Heart right ventricle (tissue), 16 donors: ENCODE measurements at regions of chr10 and their contacts with region 1.

Region 1: GRCh38 chr10:58775960-58776567 is 263.4 kb downstream of the BICC1 start:
- DNase-seq: peak in 1 of 2 donors; percentile 40
- ATAC-seq: peak; percentile 68 to 93 (median 82)
- H3K4me3 ChIP-seq: no peak overlapping the region
- H3K27ac ChIP-seq: peak overlapping the region in 5 of 10 donors; percentile 28 to 53 (median 49)
- H3K4me1 ChIP-seq: peaks cover 0 to 34% (median 16%) of the 10 kb centered on the region in 9 donors
- H3K27me3 ChIP-seq: peaks cover 0 to 7% (median 0%) of the 10 kb centered on the region in 7 donors
- CTCF ChIP-seq: no peak

Region 2: DNA sequence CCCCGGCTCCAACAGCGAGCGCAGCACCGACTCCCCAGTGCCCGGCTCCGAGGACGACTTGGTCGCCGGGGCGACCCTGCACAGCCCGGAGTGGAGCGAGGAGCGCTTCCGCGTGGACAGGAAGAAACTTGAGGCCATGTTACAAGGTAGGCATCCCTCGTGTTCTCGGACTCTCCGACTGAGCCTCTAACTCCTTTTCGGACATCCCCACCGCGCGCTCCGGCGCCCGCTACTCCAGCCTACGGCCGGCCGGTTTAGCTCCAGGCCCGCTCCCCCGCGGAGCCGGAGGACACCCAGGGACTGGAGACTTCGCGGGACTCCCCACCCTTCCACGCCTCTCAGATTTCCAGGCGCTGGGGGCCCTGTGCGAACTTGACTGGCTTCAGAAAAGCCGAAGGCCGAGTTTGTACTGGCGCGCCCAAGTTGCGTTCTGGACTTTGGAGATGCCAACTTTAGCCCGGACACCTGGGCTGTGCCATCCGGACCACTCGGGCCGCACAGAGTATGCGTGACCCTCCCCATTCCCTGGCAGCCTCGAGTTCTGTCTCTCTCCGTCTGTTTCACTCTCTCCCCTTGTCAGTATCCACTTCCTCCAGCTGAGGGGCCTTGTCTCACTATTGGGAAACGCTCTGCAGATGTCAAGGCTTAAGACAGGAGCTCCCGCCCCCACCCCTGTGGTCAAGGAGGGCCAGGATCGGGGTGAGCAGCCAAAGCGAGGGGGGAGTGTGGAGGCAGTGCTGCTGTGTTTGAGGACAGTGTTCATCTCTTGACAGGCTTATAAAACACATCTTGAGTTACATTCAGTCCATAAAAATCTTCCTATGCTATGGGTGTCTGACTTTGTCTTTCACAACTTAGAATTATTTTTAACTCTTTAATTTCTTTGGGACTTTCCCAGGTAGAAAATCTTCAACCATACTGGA is 262.6 kb before region 1 on chr10:
- intact Hi-C with region 1: loop called in 1 of 10 experiments (anchors 10 kb)
- DNase-seq: peak; percentile 50 to 53
- ATAC-seq: peak; percentile 74 to 85 (median 80)
- H3K4me3 ChIP-seq: peak overlapping the region; percentile 26 to 69 (median 64)
- H3K27ac ChIP-seq: peak overlapping the region; percentile 50 to 89 (median 80)
- H3K4me1 ChIP-seq: peaks cover 0 to 11% (median 0%) of the 10 kb centered on the region in 9 donors
- H3K27me3 ChIP-seq: peaks cover 0 to 56% (median 25%) of the 10 kb centered on the region in 7 donors
- CTCF ChIP-seq: no peak

Region 3: DNA sequence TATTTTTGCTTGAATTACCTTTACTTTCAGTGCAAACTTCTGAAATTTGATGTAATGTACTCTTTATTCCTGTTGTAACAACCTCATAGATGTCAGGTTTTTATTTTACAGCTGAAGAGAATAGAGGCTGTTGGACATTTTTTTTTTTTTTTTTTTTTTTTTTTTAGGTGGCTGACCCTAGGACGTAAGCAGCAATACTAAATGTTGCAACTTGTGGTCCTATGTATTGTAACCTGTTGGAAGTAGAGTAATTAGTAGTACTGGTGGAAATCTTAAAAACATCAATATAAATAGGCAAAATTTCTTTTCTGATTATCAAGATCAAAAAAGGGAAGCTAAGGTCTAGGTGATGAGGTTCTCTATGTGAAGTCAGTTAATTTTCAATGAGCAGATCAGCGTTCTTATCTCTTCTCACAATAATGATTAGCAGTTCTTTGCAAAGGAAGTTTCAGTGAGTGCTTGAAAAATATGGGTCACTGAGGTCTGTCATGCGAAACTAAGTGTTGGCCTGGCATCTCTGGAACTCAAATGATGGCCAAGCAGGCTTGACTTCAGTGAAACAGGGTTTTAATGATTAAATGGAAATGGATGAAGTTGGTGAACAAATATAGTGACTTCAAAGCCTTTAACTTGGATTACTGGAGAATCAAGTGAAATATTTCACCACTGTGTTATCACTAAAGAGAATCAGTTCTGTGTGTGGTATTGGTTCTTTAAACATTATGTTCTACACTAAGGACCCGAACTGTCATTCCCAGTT is 220.7 kb before region 1 on chr10:
- intact Hi-C with region 1: no loop called
- DNase-seq: no peak
- ATAC-seq: no peak
- H3K4me3 ChIP-seq: no peak overlapping the region
- H3K27ac ChIP-seq: no peak overlapping the region
- H3K4me1 ChIP-seq: no peaks in the 10 kb centered on the region
- H3K27me3 ChIP-seq: no peaks in the 10 kb centered on the region
- CTCF ChIP-seq: no peak

Region 4: GRCh38 chr10:58625070-58625469 is 151.0 kb before region 1 on chr10:
- intact Hi-C with region 1: no loop called
- DNase-seq: no peak
- ATAC-seq: peak in 6 of 8 donors; percentile 57 to 92 (median 80)
- H3K4me3 ChIP-seq: no peak overlapping the region
- H3K27ac ChIP-seq: peak overlapping the region in 1 of 10 donors; percentile 41
- H3K4me1 ChIP-seq: peaks cover 0 to 7% (median 0%) of the 10 kb centered on the region in 9 donors
- H3K27me3 ChIP-seq: no peaks in the 10 kb centered on the region
- CTCF ChIP-seq: no peak

Region 5: GRCh38 chr10:58641095-58641531 is 135.0 kb before region 1 on chr10:
- intact Hi-C with region 1: loop called in 1 of 10 experiments (anchors 10 kb)
- DNase-seq: no peak
- ATAC-seq: peak in 3 of 8 donors; percentile 18 to 21 (median 21)
- H3K4me3 ChIP-seq: no peak overlapping the region
- H3K27ac ChIP-seq: peak overlapping the region in 3 of 10 donors; percentile 5 to 30 (median 24)
- H3K4me1 ChIP-seq: peaks cover 0 to 38% (median 11%) of the 10 kb centered on the region in 9 donors
- H3K27me3 ChIP-seq: no peaks in the 10 kb centered on the region
- CTCF ChIP-seq: peak in 5 of 9 donors; percentile 11 to 44 (median 28)

Region 6: DNA sequence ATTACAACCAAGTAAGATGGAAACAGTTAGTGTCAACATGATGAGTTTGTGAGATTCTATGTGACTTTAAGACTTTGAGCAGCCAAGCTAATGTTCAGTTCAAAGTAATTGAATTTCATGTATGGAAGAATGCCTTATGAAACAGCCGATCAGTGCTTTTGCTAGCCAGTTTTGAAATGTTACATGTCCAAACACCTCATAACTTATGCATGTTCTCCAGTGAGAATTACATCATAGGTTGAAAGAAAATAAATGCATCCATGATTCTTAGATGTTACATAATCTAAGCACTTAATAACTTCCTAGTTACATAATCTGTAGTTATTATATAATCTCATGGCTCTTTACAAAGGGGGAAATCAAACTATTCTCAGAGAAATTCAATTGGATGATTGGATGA is 52.1 kb before region 1 on chr10:
- intact Hi-C with region 1: no loop called
- DNase-seq: no peak
- ATAC-seq: peak in 1 of 8 donors; percentile 38
- H3K4me3 ChIP-seq: no peak overlapping the region
- H3K27ac ChIP-seq: peak overlapping the region in 4 of 10 donors; percentile 17 to 56 (median 30)
- H3K4me1 ChIP-seq: peaks cover 0 to 4% (median 0%) of the 10 kb centered on the region in 9 donors
- H3K27me3 ChIP-seq: no peaks in the 10 kb centered on the region
- CTCF ChIP-seq: no peak

Region 7: GRCh38 chr10:58820883-58821846 is 45.1 kb after region 1 on chr10:
- intact Hi-C with region 1: no loop called
- DNase-seq: no peak
- ATAC-seq: peak in 1 of 8 donors; percentile 38
- H3K4me3 ChIP-seq: no peak overlapping the region
- H3K27ac ChIP-seq: peak overlapping the region in 4 of 10 donors; percentile 2 to 38 (median 6)
- H3K4me1 ChIP-seq: peaks cover 0 to 44% (median 11%) of the 10 kb centered on the region in 9 donors
- H3K27me3 ChIP-seq: no peaks in the 10 kb centered on the region
- CTCF ChIP-seq: no peak

Region 8: GRCh38 chr10:59190332-59190731 is 414.3 kb after region 1 on chr10:
- intact Hi-C with region 1: loop called in 2 of 10 experiments (anchors 10 kb)
- DNase-seq: no peak
- ATAC-seq: no peak
- H3K4me3 ChIP-seq: no peak overlapping the region
- H3K27ac ChIP-seq: no peak overlapping the region
- H3K4me1 ChIP-seq: no peaks in the 10 kb centered on the region
- H3K27me3 ChIP-seq: no peaks in the 10 kb centered on the region
- CTCF ChIP-seq: no peak